A673 (cell line): ENCODE measurements at regions of chr6 and their contacts with region 1.

Region 1: DNA sequence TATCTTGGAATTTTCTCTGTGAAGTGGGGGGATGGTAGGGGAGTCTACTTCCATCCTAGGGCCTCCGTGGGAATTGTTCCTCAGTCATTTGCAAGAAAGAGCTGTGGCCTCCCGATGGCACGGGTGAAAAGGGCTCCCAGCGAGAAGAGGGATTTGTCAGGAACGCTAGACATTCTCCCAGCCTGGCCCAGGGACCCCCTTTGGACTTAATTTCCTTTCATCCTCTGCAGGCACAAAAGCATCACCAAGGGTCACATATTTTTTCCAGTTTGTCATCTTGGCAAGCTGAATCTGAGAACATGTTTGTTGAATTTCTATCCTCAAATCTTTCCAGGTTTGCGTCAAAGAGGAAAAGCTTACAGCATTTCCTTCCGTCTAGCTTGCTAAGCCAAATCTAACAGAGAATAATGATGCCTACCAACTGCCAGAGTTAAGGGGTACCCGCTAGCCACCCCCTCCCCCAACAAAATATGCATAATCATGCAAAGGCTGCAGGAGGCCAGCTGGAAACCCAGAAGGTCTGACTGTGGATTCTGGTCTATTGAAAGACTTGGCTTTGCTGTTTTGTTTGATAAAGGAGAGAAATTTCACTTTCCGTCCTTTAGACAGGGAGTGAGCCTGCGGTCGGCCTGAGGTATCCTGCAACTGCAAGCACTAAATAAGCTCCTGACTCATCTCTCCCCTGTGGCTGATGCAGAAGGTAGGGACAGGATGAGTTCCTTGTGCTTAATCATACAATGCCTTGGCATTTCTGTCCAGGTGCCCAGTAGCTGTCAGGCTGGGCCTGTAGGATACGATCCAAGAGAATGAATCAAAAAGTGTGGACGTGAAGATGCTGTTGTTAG is 23.1 kb downstream of the PSMG4 start:
- DNase-seq: peak; percentile 19
- H3K4me3 ChIP-seq: no peak overlapping the region
- H3K27ac ChIP-seq: peak overlapping the region; percentile 3
- H3K4me1 ChIP-seq: peaks cover 18% of the 10 kb centered on the region
- H3K27me3 ChIP-seq: no peaks in the 10 kb centered on the region
- CTCF ChIP-seq: no peak

Region 2: GRCh38 chr6:2695454-2696095 is 586.3 kb before region 1 on chr6:
- CTCF ChIA-PET with region 1: no interaction called
- POLR2A ChIA-PET with region 1: no interaction called
- intact Hi-C with region 1: no loop called
- DNase-seq: peak; percentile 44
- H3K4me3 ChIP-seq: no peak overlapping the region
- H3K27ac ChIP-seq: no peak overlapping the region
- H3K4me1 ChIP-seq: no peaks in the 10 kb centered on the region
- H3K27me3 ChIP-seq: peaks cover 6% of the 10 kb centered on the region
- CTCF ChIP-seq: peak; percentile 50

Region 3: DNA sequence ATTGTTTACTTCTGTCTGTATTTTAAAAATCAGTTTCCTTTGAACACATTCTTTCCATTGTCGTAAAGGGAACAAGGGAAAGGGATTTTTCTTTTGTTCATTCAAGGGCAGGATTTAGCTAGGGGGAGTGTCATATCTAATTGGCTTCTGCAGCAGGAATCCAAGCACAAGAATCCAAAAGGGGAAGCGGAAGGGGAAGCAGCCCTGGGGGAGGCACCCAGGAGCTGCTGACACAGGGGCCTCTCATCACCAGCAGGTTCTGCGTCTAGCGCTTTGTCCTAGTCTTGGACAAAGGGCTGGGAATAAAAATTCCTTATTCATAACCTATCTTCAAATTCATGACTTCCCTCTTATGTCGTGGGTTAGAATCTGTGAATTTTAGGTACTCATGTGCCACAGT is 199.9 kb before region 1 on chr6:
- CTCF ChIA-PET with region 1: interaction called, 14 read pairs
- POLR2A ChIA-PET with region 1: no interaction called
- intact Hi-C with region 1: no loop called
- DNase-seq: peak; percentile 30
- H3K4me3 ChIP-seq: no peak overlapping the region
- H3K27ac ChIP-seq: no peak overlapping the region
- H3K4me1 ChIP-seq: no peaks in the 10 kb centered on the region
- H3K27me3 ChIP-seq: no peaks in the 10 kb centered on the region
- CTCF ChIP-seq: no peak

Region 4: DNA sequence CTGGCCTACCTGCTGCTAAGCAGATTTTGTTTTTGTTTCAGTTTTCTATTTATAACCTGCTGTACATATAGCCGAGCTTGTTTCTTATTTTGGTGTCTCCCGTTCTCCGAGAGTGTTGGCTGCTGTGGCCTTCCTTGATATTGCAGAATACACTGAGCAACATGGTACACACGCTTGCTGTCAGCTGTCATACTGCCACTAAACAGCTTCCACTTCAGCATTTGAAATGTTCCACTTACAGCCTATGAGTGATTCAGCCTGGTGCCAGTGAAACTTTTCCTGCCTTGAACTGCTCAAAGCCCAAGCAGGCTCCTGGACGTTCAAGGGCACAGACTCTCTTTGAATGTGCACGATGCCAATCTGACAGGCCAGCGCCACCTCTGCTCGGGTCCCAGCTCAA is 64.0 kb after region 1 on chr6:
- CTCF ChIA-PET with region 1: no interaction called
- POLR2A ChIA-PET with region 1: no interaction called
- intact Hi-C with region 1: no loop called
- DNase-seq: no peak
- H3K4me3 ChIP-seq: no peak overlapping the region
- H3K27ac ChIP-seq: no peak overlapping the region
- H3K4me1 ChIP-seq: peaks cover 44% of the 10 kb centered on the region
- H3K27me3 ChIP-seq: no peaks in the 10 kb centered on the region
- CTCF ChIP-seq: no peak

Region 5: DNA sequence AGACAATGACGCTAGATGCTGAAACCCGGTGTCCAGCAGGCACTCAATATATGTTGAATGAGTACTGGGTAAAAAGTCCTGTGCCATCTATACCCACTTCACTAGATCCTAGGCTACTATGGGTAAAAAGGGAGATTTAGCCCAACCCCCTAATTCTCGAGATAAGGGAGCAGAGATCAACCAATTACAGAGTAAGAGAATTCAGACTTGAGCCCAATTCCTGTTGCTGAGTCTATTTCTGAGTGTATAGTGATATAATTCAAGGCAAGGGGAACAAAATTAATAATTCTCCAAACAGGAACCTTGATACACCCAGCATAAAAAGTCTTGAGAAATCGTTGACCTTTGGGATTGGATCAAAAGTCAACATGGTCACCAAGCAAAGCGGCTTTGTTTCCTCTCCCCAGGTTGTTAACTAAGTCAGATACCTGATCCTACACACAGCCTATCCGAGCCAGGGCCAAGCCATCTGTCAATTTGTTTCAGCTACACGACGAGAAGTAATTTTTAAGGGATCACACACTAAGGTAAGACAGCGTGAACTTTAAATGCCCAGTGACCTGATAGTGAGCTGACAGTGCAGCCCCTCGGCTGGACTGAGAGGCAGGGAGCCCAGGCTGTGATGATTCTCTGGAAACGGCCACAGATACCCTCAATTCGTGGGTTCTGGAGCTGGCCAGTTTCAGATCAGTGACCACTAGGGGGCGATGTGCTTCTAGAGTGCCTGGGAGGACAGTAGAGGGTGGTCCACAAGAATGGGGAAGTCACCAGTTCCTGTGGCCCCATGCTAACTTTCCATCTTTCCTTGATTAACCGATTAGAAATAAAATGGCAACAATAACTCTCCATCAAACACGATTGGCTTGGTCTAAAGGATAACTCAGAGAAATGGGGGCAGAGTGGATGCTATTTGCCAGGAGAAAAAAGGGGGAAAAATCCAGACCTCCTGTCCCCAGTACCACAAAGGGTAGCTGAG is 128.8 kb after region 1 on chr6:
- CTCF ChIA-PET with region 1: no interaction called
- POLR2A ChIA-PET with region 1: no interaction called
- intact Hi-C with region 1: loop called (anchors 5 kb)
- DNase-seq: peak; percentile 84
- H3K4me3 ChIP-seq: no peak overlapping the region
- H3K27ac ChIP-seq: no peak overlapping the region
- H3K4me1 ChIP-seq: no peaks in the 10 kb centered on the region
- H3K27me3 ChIP-seq: no peaks in the 10 kb centered on the region
- CTCF ChIP-seq: peak; percentile 94

Region 6: DNA sequence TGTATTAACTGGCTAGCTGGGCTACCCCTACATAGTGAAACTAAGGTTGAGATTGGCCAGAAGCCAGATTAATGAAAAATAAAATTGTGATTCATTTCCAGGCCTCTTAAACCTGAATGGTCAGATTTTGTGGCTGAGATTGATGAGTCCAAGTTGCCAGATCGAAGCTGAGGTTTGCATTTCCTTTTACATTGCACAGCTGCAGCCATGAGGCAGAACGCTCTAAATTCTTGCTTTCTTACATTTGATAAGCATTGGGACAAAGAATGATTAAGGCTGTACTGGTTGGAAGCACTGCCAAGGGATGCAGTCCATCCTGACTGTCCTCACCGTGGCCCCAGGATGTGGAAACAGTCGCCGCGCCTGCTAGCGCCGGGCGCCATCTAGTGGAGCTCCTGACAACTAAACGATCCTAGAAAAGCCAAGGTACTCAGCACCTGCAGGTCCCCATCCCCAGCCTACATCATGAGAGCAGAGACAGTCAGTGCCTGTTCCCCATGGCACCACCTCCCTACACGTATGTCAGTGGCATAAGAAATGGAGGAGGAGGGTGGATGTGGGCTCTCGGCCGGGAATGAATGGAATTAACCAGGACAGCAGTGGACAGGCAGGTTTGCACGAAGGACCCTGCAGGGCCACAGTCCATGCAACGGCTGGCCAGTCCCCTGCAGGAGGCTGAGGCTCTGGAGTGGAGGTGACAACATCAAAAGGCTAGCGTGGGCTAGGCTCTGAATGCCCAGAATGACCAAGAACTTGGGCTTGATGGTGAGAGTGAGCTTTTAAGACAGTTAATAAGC is 450.7 kb after region 1 on chr6:
- CTCF ChIA-PET with region 1: interaction called, 17 read pairs
- POLR2A ChIA-PET with region 1: no interaction called
- intact Hi-C with region 1: loop called (anchors 1 kb)
- DNase-seq: peak; percentile 76
- H3K4me3 ChIP-seq: no peak overlapping the region
- H3K27ac ChIP-seq: no peak overlapping the region
- H3K4me1 ChIP-seq: no peaks in the 10 kb centered on the region
- H3K27me3 ChIP-seq: no peaks in the 10 kb centered on the region
- CTCF ChIP-seq: peak; percentile 91

Region 7: GRCh38 chr6:3990692-3991501 is 709.0 kb after region 1 on chr6:
- CTCF ChIA-PET with region 1: no interaction called
- POLR2A ChIA-PET with region 1: no interaction called
- intact Hi-C with region 1: loop called (anchors 5 kb)
- DNase-seq: peak; percentile 94
- H3K4me3 ChIP-seq: no peak overlapping the region
- H3K27ac ChIP-seq: peak overlapping the region; percentile 59
- H3K4me1 ChIP-seq: peaks cover 3% of the 10 kb centered on the region
- H3K27me3 ChIP-seq: no peaks in the 10 kb centered on the region
- CTCF ChIP-seq: peak; percentile 95